ENCODE measurements at regions of chr1 and their contacts with region 1.

Region 1: GRCh38 chr1:171188388-171189266 is 3.5 kb downstream of the FMO2 start:
- DNase-seq: peak; percentile 69
- H3K4me3 Mint-ChIP-seq: peak overlapping the region; percentile 18
- H3K27ac Mint-ChIP-seq: no peak overlapping the region
- H3K4me1 Mint-ChIP-seq: peaks cover 8% of the 10 kb centered on the region
- H3K27me3 Mint-ChIP-seq: peaks cover 13% of the 10 kb centered on the region
- CTCF ChIP-seq: peak; percentile 77

Region 2: GRCh38 chr1:170967042-170967910 is 221.4 kb before region 1 on chr1:
- CTCF ChIA-PET with region 1: interaction called, 5 read pairs
- intact Hi-C with region 1: loop called (anchors 1 kb)
- DNase-seq: peak; percentile 18
- H3K4me3 Mint-ChIP-seq: no peak overlapping the region
- H3K27ac Mint-ChIP-seq: no peak overlapping the region
- H3K4me1 Mint-ChIP-seq: no peaks in the 10 kb centered on the region
- H3K27me3 Mint-ChIP-seq: peaks cover 11% of the 10 kb centered on the region
- CTCF ChIP-seq: peak; percentile 46

Region 3: DNA sequence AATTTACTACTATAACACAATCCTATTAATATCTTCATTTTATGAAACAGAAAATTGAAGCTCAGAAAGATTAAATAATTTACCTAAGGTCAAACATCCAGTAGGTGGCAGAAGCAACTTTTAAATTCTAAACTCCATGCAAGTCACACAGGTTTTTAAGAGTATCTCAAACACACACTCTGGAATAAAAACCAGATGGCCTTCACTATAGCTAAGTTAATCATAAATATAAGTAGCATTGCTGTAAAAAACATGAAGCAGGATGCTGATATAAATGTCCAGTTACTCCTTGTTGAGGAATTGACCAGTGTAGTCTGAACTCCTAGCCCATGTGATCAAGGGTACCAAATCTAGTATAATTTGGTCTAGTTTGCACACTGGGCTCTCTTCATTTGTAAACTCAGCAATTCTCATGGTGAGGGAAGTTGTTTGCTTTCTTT is 107.3 kb before region 1 on chr1:
- CTCF ChIA-PET with region 1: interaction called, 6 read pairs
- intact Hi-C with region 1: loop called (anchors 1 kb)
- DNase-seq: no peak
- H3K4me3 Mint-ChIP-seq: no peak overlapping the region
- H3K27ac Mint-ChIP-seq: no peak overlapping the region
- H3K4me1 Mint-ChIP-seq: no peaks in the 10 kb centered on the region
- H3K27me3 Mint-ChIP-seq: peaks cover 14% of the 10 kb centered on the region
- CTCF ChIP-seq: no peak

Region 4: GRCh38 chr1:171138980-171139379 is 49.6 kb before region 1 on chr1:
- CTCF ChIA-PET with region 1: no interaction called
- intact Hi-C with region 1: loop called (anchors 5 kb)
- DNase-seq: no peak
- H3K4me3 Mint-ChIP-seq: no peak overlapping the region
- H3K27ac Mint-ChIP-seq: no peak overlapping the region
- H3K4me1 Mint-ChIP-seq: no peaks in the 10 kb centered on the region
- H3K27me3 Mint-ChIP-seq: no peaks in the 10 kb centered on the region
- CTCF ChIP-seq: no peak

Region 5: DNA sequence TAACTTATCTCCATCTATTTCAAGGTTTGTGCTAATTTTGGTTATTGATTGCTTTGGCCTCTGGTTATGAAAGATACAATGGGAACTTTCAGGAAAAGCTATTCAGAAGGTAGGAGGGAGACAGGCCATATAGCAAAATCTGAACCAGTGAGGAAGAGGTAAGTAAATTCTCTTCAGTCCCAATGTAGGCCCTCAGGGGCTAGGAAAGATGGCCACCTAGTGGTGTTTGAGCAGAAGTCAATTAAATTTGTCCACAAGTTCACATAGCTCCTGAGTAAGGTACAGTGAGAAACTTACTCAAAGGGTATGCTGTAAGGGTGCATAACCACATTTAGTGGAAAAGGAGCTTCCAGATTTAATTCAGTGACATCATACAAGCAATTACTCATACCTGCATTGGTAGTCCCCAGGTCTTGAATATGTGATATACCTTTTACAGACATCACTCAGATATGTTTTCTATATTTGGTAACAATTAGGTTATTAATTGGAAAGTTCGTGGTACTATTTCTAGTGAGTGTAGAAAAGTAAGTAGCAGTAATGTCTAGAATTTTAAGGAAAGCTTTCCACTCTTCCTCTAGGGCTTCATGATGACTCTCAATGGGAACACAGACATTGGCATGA is 38.2 kb after region 1 on chr1:
- CTCF ChIA-PET with region 1: no interaction called
- intact Hi-C with region 1: loop called (anchors 2 kb)
- DNase-seq: peak; percentile 62
- H3K4me3 Mint-ChIP-seq: no peak overlapping the region
- H3K27ac Mint-ChIP-seq: no peak overlapping the region
- H3K4me1 Mint-ChIP-seq: no peaks in the 10 kb centered on the region
- H3K27me3 Mint-ChIP-seq: no peaks in the 10 kb centered on the region
- CTCF ChIP-seq: peak; percentile 84